OCI-LY7 (cell line): ENCODE measurements at regions of chr17 and their contacts with region 1.

Region 1: GRCh38 chr17:21284319-21285163 is at the start of gene MAP2K3:
- DNase-seq: peak; percentile 99
- H3K4me3 ChIP-seq: peak within 1 kb of the TSS; percentile 84
- H3K27ac ChIP-seq: peak within 1 kb of the TSS; percentile 95
- H3K4me1 ChIP-seq: peaks cover 58% of the 10 kb centered on the region
- CTCF ChIP-seq: no peak
- total RNA-seq, gene MAP2K3: 13.6 and 27.8 TPM in 2 replicates

Region 2: DNA sequence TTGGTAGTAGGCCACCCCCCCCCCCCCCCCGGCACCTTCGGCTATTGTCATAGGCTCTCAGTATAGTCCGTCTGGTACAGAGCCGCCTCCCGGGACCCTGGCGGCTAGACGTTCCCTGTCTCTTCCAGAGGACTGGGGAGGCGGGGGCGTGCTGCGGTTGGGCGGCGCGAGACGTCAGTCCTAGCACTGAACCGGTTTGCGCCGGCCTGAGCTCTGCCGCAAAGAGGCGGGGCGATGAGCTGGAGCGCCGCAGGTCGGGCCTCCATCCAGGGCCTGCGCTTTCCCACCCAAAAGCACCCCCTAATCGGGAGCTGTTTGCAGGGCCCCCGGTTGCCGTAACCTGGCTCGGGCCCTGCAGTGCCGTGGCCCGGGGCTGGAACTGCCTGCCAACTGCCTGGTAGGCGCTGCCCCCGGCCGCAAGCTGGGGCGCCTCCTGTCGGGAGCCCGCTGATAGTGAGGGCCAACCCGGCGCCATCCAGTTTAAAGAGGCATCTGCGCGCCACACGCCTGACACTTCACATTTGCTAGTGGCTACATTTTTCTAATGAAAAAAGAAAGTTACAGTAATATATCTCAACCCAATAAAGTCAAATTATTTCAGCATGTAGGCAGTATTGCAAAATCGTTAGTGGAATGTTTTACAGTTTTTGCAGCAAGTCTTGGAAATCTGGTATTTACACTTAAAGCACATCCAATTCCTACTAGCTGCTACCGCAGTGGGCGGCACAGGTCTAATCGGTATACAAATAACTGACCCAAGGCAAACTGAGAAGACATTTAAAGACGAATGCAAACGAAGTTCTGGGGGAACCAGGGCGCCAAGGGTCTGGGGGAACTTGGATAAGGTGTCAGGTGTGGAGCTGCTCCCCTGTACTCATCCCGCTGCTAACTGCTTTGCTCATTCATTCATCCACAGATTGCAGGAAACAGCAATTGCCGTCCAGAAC is 241.0 kb before region 1 on chr17:
- CTCF ChIA-PET with region 1: no interaction called
- POLR2A ChIA-PET with region 1: no interaction called
- intact Hi-C with region 1: loop called (anchors 5 kb)
- DNase-seq: peak; percentile 39
- H3K4me3 ChIP-seq: peak overlapping the region; percentile 66
- H3K27ac ChIP-seq: peak overlapping the region; percentile 86
- H3K4me1 ChIP-seq: peaks cover 30% of the 10 kb centered on the region
- CTCF ChIP-seq: peak; percentile 94

Region 3: GRCh38 chr17:21113716-21114115 is 170.8 kb before region 1 on chr17:
- CTCF ChIA-PET with region 1: no interaction called
- POLR2A ChIA-PET with region 1: no interaction called
- intact Hi-C with region 1: no loop called
- DNase-seq: no peak
- H3K4me3 ChIP-seq: no peak overlapping the region
- H3K27ac ChIP-seq: no peak overlapping the region
- H3K4me1 ChIP-seq: no peaks in the 10 kb centered on the region
- CTCF ChIP-seq: no peak

Region 4: GRCh38 chr17:21126645-21127510 is 157.7 kb before region 1 on chr17 and contains the start of gene DHRS7B:
- CTCF ChIA-PET with region 1: no interaction called
- POLR2A ChIA-PET with region 1: no interaction called
- intact Hi-C with region 1: loop called (anchors 2 kb)
- DNase-seq: peak; percentile 98
- H3K4me3 ChIP-seq: peak within 1 kb of the TSS; percentile 81
- H3K27ac ChIP-seq: peak within 1 kb of the TSS; percentile 68
- H3K4me1 ChIP-seq: peaks cover 19% of the 10 kb centered on the region
- CTCF ChIP-seq: peak; percentile 16; the same call in 1 of the 2 replicates
- total RNA-seq, gene DHRS7B: 11.6 and 16.0 TPM in 2 replicates

Region 5: DNA sequence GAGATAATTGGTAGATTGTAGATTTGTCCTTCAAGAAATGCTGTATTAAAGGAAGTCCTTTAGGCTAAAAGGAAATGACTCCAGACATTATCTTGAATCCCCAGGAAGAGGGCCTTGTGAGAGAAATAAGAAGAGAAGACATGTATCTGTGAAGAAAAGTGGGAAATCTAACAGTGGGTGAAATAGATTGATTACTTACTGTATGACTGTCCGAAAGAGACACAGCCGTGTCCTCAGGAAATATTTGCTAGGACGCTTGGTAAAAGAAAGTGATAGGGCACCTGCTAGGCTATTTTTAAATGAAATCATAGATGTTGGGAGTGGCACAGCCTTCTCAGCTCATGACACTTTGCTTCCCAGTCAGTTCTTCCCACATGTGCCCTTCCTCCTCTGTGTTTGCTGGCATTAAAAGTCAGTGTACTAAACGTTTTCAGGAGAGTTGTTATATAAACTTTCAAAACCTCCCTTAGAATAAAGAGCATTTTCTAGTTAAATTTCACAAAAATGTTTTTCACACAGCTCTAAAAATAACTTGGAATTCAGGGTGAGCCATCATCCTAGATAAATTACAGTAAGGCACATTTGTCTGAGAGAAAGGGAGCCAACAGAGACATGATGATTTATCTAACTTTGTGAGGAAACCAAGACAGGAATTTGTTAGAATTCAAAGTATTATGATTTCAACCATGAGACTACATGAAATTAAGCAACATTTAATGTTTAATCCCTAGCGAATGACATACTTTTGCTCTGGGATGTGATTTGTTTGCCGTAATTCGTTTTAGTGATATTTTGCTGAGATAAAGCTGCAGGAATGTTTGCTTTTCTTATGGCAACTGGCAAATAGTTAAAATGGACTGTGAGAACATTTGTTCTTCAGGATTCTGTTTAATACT is 122.8 kb before region 1 on chr17:
- CTCF ChIA-PET with region 1: no interaction called
- POLR2A ChIA-PET with region 1: no interaction called
- intact Hi-C with region 1: no loop called
- DNase-seq: no peak
- H3K4me3 ChIP-seq: no peak overlapping the region
- H3K27ac ChIP-seq: no peak overlapping the region
- H3K4me1 ChIP-seq: no peaks in the 10 kb centered on the region
- CTCF ChIP-seq: no peak

Region 6: GRCh38 chr17:21214015-21214776 is 70.3 kb before region 1 on chr17 and contains the start of gene TMEM11:
- CTCF ChIA-PET with region 1: no interaction called
- POLR2A ChIA-PET with region 1: no interaction called
- intact Hi-C with region 1: loop called (anchors 2 kb)
- DNase-seq: peak; percentile 97
- H3K4me3 ChIP-seq: peak within 1 kb of the TSS; percentile 97
- H3K27ac ChIP-seq: peak within 1 kb of the TSS; percentile 60
- H3K4me1 ChIP-seq: peaks cover 27% of the 10 kb centered on the region
- CTCF ChIP-seq: peak; percentile 41; the same call in 1 of the 2 replicates
- total RNA-seq, gene TMEM11: 26.8 and 27.3 TPM in 2 replicates

Region 7: DNA sequence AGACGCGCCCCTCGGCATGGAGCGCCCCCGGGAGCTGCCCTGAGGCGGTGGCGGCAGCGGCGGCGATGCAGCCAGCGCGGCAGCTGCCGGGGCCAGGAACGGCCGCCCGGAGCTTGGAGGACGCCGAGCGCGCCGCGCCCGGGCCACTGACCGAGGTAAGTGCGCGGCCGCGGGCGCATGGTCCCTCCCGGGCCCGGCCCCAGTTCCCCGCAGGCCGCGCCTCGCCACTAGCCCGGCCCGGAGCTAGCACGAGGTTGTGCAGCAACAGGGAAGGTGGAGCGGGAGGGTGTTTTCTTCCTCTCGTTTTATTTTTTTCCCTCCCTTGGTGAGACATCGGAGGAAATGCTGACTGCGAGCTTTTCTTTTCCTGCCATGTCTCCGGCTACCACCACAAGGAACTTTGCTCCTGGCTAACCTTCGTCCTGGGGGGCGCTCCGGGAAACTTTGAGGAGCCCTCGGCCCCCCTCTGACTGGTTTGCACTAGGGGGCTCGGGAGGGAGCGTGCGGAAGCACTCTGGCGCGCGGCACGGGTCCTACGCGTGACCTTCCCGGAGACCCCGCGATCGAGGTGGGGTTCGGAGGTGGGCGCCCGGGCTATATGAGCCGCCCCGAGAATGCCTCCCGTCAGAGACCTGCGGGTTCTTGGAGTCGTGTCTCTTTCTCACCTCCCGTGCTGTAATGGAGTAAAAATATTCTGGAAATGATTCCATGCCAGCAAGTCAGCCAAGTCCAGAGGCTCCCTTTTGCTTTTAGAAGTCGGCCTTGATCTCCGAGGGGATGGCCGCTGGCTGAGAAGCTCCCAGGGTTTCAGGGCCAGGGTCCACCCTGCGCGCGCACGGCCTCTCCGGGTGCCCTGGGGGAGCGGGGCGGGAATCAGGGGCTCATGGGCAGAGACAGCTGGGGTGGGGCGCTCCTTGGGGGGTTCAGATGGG is 92.5 kb after region 1 on chr17:
- CTCF ChIA-PET with region 1: interaction called, 4 read pairs
- POLR2A ChIA-PET with region 1: interaction called, 11 read pairs
- intact Hi-C with region 1: loop called (anchors 1 kb)
- DNase-seq: no peak
- H3K4me3 ChIP-seq: peak overlapping the region; percentile 48
- H3K27ac ChIP-seq: no peak overlapping the region
- H3K4me1 ChIP-seq: peaks cover 4% of the 10 kb centered on the region
- CTCF ChIP-seq: no peak

Region 8: DNA sequence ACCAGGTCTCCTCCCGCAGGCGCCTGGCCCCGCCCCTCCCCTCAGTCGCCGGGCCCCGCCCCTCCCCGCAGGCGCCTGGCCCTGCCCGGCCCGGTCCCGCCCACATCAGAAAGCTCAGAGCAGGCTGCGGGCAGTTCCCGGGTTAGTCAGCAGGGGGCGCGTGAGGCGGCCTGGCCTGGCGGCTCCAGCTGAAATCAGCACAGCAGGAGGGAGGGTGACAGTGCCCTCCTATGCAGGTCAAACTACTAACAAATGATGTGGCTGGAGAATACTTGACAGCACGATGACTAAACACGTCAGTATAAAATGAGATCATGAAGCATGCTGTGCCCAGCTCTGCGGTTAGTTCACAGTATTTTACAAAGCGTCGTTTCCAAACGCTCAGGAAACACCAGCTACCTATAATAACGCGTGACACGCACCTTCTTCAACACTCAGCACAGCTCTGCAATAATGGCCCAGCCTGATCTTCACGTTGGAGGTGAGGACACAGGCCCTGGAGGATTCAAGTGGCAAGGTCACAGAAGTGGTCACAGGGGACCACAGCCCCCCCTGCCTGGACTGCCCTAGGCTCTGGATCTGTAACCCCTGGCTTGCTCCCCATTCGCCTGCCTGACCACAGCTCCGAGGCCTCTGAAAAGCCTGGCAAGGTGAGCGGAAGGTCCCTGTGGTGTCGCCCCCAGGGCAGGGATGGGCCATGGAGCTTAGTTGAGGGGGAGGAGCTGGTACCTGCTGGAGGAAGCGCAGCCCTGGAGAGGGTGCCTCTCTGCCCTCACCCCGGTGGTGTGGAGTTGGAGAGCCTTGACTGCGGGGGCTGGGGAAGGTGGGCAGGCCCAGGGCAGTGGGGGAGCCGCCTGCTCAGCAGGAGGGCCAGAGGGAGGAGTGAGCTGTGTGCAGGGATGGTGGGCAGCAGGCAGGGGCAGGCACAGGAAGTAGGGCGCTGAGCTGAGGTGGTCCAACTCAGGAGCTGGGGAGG is 172.8 kb after region 1 on chr17:
- CTCF ChIA-PET with region 1: interaction called, 3 read pairs
- POLR2A ChIA-PET with region 1: no interaction called
- intact Hi-C with region 1: loop called (anchors 5 kb)
- DNase-seq: peak; percentile 81
- H3K4me3 ChIP-seq: no peak overlapping the region
- H3K27ac ChIP-seq: no peak overlapping the region
- H3K4me1 ChIP-seq: no peaks in the 10 kb centered on the region
- CTCF ChIP-seq: peak; percentile 85